Naive thymus-derived CD4-positive, alpha-beta T cell (primary cell): ENCODE measurements at regions of chr5 and their contacts with region 1.

Region 1: DNA sequence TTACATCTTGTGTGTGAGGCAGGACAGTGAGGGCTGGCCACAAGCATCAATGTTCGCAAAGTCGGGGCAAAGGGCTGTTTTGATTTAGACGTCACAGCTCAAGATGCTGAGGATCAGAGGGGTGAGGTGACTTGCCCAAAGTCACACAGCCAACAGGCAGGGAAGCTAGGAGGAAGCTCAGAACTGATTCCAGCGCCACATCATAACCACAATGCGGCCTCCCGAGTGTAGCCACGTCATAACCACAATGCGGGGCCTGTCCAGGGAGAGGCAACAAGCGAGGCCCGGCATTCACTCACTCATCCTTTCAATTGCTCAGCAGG is 14.2 kb downstream of the STK10 start:
- DNase-seq: peak in 6 of 9 donors; percentile 19 to 79 (median 28)
- ATAC-seq: peak; percentile 32
- H3K4me3 ChIP-seq: peak overlapping the region; percentile 58
- H3K4me3 Mint-ChIP-seq: peak overlapping the region; percentile 87 to 99 (median 94)
- H3K27ac ChIP-seq: peak overlapping the region; percentile 92
- H3K27ac Mint-ChIP-seq: peak overlapping the region; percentile 94 to 100 (median 98)
- H3K4me1 ChIP-seq: peaks cover 77 to 83% of the 10 kb centered on the region in 2 donors
- H3K4me1 Mint-ChIP-seq: peaks cover 76 to 99% (median 93%) of the 10 kb centered on the region in 7 donors
- H3K27me3 ChIP-seq: no peaks in the 10 kb centered on the region
- H3K27me3 Mint-ChIP-seq: no peaks in the 10 kb centered on the region

Region 2: GRCh38 chr5:172114875-172115422 is 58.8 kb before region 1 on chr5:
- CTCF ChIA-PET with region 1: interaction called, 4 read pairs
- POLR2A ChIA-PET with region 1: interaction called, 62 read pairs
- intact Hi-C with region 1: loop called (anchors 1 kb)
- DNase-seq: peak; percentile 35 to 78 (median 44)
- ATAC-seq: peak; percentile 70
- H3K4me3 ChIP-seq: peak overlapping the region; percentile 50
- H3K4me3 Mint-ChIP-seq: peak overlapping the region; percentile 54 to 90 (median 80)
- H3K27ac ChIP-seq: peak overlapping the region; percentile 70
- H3K27ac Mint-ChIP-seq: peak overlapping the region; percentile 75 to 98 (median 94)
- H3K4me1 ChIP-seq: peaks cover 67 to 80% of the 10 kb centered on the region in 2 donors
- H3K4me1 Mint-ChIP-seq: peaks cover 48 to 86% (median 72%) of the 10 kb centered on the region in 7 donors
- H3K27me3 ChIP-seq: no peaks in the 10 kb centered on the region
- H3K27me3 Mint-ChIP-seq: no peaks in the 10 kb centered on the region